ENCODE measurements at regions of chr19 and their contacts with region 1.

Region 1: DNA sequence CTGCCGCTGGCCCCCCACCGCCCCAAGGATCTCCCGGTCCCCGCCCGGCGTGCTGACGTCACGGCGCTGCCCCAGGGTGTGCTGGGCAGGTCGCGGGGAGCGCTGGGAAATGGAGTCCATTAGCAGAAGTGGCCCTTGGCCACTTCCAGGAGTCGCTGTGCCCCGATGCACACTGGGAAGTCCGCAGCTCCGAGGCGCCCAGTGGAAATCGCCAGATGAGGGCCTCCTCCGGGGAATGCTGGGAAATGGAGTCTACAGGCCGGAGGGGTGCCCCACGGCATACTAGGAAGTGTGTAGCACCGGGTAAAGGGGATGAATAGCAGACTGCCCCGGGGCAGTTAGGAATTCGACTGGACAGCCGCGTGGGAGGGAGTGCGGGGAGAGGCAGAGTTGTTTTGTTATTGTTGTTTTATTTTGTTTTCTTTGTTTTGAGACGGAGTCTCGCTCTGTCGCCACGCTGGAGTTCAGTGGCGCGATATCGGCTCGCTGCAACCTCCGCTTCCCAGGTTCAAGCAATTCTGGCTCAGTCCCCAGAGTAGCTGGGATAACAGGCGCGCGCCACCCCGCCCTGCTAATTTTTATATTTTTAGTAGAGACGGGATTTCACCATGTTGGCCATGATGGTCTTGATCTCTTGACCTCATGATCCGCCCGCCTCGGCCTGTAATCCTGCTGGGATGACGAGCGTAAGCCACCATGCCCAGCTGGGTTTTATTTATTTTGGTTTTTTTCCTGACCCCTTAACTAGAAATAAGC is at the start of gene PPP1R12C:
- DNase-seq: peak; percentile 93 to 98
- ATAC-seq: peak; percentile 90 to 98 (median 93)
- H3K4me3 ChIP-seq: peak within 1 kb of the TSS; percentile 69
- H3K4me3 Mint-ChIP-seq: peak within 1 kb of the TSS; percentile 97
- H3K27ac ChIP-seq: peak within 1 kb of the TSS; percentile 45
- H3K27ac Mint-ChIP-seq: peak within 1 kb of the TSS; percentile 89 to 98
- H3K4me1 ChIP-seq: peaks cover 50% of the 10 kb centered on the region
- H3K4me1 Mint-ChIP-seq: peaks cover 36 to 49% of the 10 kb centered on the region in 2 donors
- H3K27me3 ChIP-seq: no peaks in the 10 kb centered on the region
- H3K27me3 Mint-ChIP-seq: peaks cover under 1 to 6% of the 10 kb centered on the region in 2 donors
- CTCF ChIP-seq: no peak
- total RNA-seq, gene PPP1R12C: 162 to 178 (median 174) TPM

Region 2: GRCh38 chr19:54969647-54970046 is 148.2 kb before region 1 on chr19:
- intact Hi-C with region 1: no loop called
- DNase-seq: no peak
- ATAC-seq: no peak
- H3K4me3 ChIP-seq: no peak overlapping the region
- H3K4me3 Mint-ChIP-seq: no peak overlapping the region
- H3K27ac ChIP-seq: no peak overlapping the region
- H3K27ac Mint-ChIP-seq: no peak overlapping the region
- H3K4me1 ChIP-seq: peaks cover 32% of the 10 kb centered on the region
- H3K4me1 Mint-ChIP-seq: peaks cover 17 to 22% of the 10 kb centered on the region in 2 donors
- H3K27me3 ChIP-seq: no peaks in the 10 kb centered on the region
- H3K27me3 Mint-ChIP-seq: no peaks in the 10 kb centered on the region
- CTCF ChIP-seq: no peak

Region 3: GRCh38 chr19:55178781-55179599 is 61.2 kb after region 1 on chr19:
- intact Hi-C with region 1: loop called (anchors 1 kb)
- DNase-seq: peak; percentile 98
- ATAC-seq: peak; percentile 82 to 92 (median 87)
- H3K4me3 ChIP-seq: peak overlapping the region; percentile 22
- H3K4me3 Mint-ChIP-seq: peak overlapping the region; percentile 80
- H3K27ac ChIP-seq: no peak overlapping the region
- H3K27ac Mint-ChIP-seq: peak overlapping the region; percentile 84 to 94
- H3K4me1 ChIP-seq: peaks cover 29% of the 10 kb centered on the region
- H3K4me1 Mint-ChIP-seq: peaks cover 12 to 31% of the 10 kb centered on the region in 2 donors
- H3K27me3 ChIP-seq: peaks cover 46% of the 10 kb centered on the region
- H3K27me3 Mint-ChIP-seq: peaks cover 31 to 44% of the 10 kb centered on the region in 2 donors
- CTCF ChIP-seq: no peak

Measured in natural killer cell (primary cell).